ENCODE measurements at regions of chr1 and their contacts with region 1.

Region 1: DNA sequence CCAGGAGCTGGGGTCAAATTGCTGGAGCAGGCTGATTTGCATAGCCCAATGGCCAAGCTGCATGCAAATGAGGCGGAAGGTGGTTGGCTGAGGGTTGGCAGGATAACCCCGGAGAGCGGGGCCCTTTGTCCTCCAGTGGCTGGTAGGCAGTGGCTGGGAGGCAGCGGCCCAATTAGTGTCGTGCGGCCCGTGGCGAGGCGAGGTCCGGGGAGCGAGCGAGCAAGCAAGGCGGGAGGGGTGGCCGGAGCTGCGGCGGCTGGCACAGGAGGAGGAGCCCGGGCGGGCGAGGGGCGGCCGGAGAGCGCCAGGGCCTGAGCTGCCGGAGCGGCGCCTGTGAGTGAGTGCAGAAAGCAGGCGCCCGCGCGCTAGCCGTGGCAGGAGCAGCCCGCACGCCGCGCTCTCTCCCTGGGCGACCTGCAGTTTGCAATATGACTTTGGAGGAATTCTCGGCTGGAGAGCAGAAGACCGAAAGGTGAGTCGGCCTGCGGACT is at the start of gene GADD45A:
- DNase-seq: peak; percentile 99 to 100
- H3K4me3 ChIP-seq: peak within 1 kb of the TSS; percentile 88 to 98
- H3K27ac ChIP-seq: peak within 1 kb of the TSS; percentile 95 to 99
- H3K4me1 ChIP-seq: peaks cover 0 to 55% (median 34%) of the 10 kb centered on the region in 4 donors
- H3K27me3 ChIP-seq: no peaks in the 10 kb centered on the region
- CTCF ChIP-seq: peak in 1 of 2 experiments; percentile 4

Region 2: GRCh38 chr1:67561704-67562113 is 123.4 kb before region 1 on chr1:
- intact Hi-C with region 1: loop called (anchors 10 kb)
- DNase-seq: peak; percentile 92 to 96
- H3K4me3 ChIP-seq: no peak overlapping the region
- H3K27ac ChIP-seq: peak overlapping the region in 1 of 2 donors; percentile 24
- H3K4me1 ChIP-seq: peaks cover 0 to 33% (median 13%) of the 10 kb centered on the region in 4 donors
- H3K27me3 ChIP-seq: no peaks in the 10 kb centered on the region
- CTCF ChIP-seq: peak; percentile 83 to 91

Region 3: GRCh38 chr1:67618285-67619018 is 66.7 kb before region 1 on chr1:
- intact Hi-C with region 1: no loop called
- DNase-seq: peak; percentile 79 to 87
- H3K4me3 ChIP-seq: peak overlapping the region; percentile 4 to 25
- H3K27ac ChIP-seq: peak overlapping the region; percentile 80 to 87
- H3K4me1 ChIP-seq: peaks cover 0 to 29% (median 20%) of the 10 kb centered on the region in 4 donors
- H3K27me3 ChIP-seq: no peaks in the 10 kb centered on the region
- CTCF ChIP-seq: no peak

Region 4: DNA sequence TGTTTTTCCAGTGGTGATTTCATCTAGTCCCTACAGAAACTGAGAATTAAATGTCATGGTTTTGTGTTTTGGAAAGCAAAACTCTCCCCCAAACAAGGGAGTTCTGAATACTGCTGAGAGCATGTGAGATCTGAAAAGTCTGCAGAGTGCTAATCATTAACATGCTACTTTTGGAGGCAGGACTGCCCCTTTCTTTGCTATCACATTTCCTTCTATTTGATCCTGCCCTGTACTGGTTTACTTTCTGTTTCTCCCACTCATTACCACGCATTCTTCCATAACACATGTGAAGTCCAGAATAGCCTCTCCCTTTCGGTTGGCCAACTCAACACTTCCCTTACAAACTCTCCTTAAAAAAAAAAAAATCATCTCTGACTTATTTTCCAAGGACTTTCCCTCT is 63.5 kb after region 1 on chr1:
- intact Hi-C with region 1: loop called (anchors 5 kb)
- DNase-seq: no peak
- H3K4me3 ChIP-seq: peak overlapping the region; percentile 2 to 32
- H3K27ac ChIP-seq: peak overlapping the region; percentile 86 to 90
- H3K4me1 ChIP-seq: peaks cover 0 to 98% (median 75%) of the 10 kb centered on the region in 4 donors
- H3K27me3 ChIP-seq: no peaks in the 10 kb centered on the region
- CTCF ChIP-seq: no peak

Region 5: DNA sequence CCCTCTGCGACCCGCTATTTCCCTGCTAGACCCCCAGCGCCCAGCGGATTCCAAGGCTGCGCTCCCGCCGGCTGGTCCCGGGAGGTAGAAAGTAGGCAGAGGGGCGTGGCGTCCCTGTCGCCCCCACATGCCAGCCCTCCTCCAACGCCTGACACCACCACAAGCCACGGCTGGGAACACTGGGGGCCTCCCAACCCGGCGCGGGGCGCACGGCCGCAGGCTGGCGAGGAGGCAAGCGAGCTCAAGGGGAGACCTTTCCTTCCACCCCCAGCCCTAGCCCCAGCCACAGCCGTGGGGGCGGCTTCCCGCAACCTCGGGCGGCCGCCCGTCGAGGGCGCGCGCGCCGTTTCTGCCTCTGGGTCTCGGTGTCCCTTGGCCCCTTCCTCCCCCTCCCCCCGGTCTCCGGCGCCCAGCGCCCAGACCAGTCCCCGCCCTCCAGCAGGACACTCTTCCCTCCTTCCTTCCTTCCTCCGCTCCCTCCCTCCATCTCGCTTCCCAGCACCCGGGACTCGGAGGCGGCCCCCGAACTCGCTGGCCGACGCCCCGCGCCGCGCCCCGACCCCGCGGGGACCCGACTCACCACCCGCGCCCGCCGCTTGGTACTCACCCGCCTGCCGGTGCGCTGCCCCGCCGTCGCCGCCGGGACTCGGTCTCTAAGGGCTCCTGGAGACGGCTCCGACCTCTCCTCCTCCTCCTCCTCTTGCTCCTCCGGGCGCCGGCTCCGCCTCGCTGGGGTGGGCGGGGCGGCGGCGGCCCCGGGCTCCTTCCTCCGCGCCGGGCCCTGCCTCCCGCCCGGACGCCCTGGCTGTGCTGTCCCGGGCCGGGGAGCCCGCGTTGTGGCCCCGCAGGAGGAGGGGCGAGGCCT is 147.9 kb after region 1 on chr1 and contains the start of gene GNG12:
- intact Hi-C with region 1: loop called (anchors 10 kb)
- DNase-seq: peak; percentile 78 to 89
- H3K4me3 ChIP-seq: peak within 1 kb of the TSS; percentile 87 to 89
- H3K27ac ChIP-seq: peak within 1 kb of the TSS; percentile 96 to 98
- H3K4me1 ChIP-seq: peaks cover 0 to 49% (median 20%) of the 10 kb centered on the region in 4 donors
- H3K27me3 ChIP-seq: no peaks in the 10 kb centered on the region
- CTCF ChIP-seq: no peak

Region 6: GRCh38 chr1:68111519-68112436 is 426.7 kb after region 1 on chr1:
- intact Hi-C with region 1: no loop called
- DNase-seq: peak; percentile 40 to 79
- H3K4me3 ChIP-seq: no peak overlapping the region
- H3K27ac ChIP-seq: no peak overlapping the region
- H3K4me1 ChIP-seq: peaks cover 0 to 19% (median 15%) of the 10 kb centered on the region in 4 donors
- H3K27me3 ChIP-seq: no peaks in the 10 kb centered on the region
- CTCF ChIP-seq: peak; percentile 66 to 70

Region 7: GRCh38 chr1:68213843-68214242 is 528.7 kb after region 1 on chr1:
- intact Hi-C with region 1: no loop called
- DNase-seq: peak; percentile 83 to 86
- H3K4me3 ChIP-seq: no peak overlapping the region
- H3K27ac ChIP-seq: peak overlapping the region; percentile 35 to 39
- H3K4me1 ChIP-seq: peaks cover 0 to 45% (median 27%) of the 10 kb centered on the region in 4 donors
- H3K27me3 ChIP-seq: no peaks in the 10 kb centered on the region
- CTCF ChIP-seq: no peak

Measured in tibial artery (tissue), 4 donors.